ENCODE measurements at regions of chr16 and their contacts with region 1.

Region 1: DNA sequence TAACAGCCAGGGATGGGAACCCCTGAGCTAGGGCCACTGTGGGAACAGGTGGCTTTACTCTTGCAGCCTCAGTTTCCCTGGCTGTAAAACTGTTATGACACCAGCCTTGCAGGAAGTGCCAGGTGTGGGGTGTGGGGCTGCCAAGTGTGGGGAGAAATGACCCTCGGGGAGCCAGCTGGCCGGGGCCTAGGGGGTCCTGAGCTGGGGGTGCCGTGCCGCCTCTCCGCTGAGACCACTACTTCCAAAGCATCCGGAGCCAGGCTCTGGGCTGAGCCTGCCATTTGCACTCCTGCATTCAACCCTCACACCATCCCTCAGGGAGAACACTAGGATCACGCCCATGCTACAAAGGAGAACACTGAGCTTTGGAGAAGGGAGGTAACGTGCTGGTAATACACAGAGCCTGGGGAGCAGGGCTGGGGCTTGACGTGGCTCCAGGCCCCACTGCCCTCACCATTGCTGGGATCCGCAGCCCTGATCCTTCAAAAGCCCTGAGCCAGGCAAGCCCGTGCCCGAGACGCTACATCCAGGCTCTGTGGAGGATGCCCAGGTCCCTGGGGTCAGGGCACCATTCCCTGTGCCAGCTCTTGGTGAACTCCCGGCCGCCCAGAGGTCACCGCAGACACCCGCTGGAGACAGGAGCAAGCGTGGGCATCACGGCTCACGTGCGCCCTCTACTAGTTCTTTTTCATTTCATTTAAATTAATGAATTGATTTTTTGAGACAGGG is 28.8 kb upstream of the GINS2 start:
- DNase-seq: peak; percentile 77
- ATAC-seq: peak; percentile 28
- H3K4me3 ChIP-seq: no peak overlapping the region
- H3K4me3 Mint-ChIP-seq: no peak overlapping the region
- H3K27ac ChIP-seq: no peak overlapping the region
- H3K27ac Mint-ChIP-seq: peak overlapping the region; percentile 26
- H3K4me1 ChIP-seq: peaks cover 7 to 34% of the 10 kb centered on the region in 2 donors
- H3K4me1 Mint-ChIP-seq: peaks cover 27% of the 10 kb centered on the region
- H3K27me3 ChIP-seq: no peaks in the 10 kb centered on the region
- H3K27me3 Mint-ChIP-seq: no peaks in the 10 kb centered on the region
- CTCF ChIP-seq: peak; percentile 80

Region 2: GRCh38 chr16:85491058-85491771 is 226.3 kb before region 1 on chr16:
- CTCF ChIA-PET with region 1: interaction called, 3 read pairs
- POLR2A ChIA-PET with region 1: interaction called, 12 read pairs
- intact Hi-C with region 1: no loop called
- DNase-seq: peak; percentile 61
- ATAC-seq: no peak
- H3K4me3 ChIP-seq: no peak overlapping the region
- H3K4me3 Mint-ChIP-seq: no peak overlapping the region
- H3K27ac ChIP-seq: no peak overlapping the region
- H3K27ac Mint-ChIP-seq: no peak overlapping the region
- H3K4me1 ChIP-seq: no peaks in the 10 kb centered on the region
- H3K4me1 Mint-ChIP-seq: peaks cover 2% of the 10 kb centered on the region
- H3K27me3 ChIP-seq: peaks cover 0 to 16% (median 0%) of the 10 kb centered on the region in 4 experiments
- H3K27me3 Mint-ChIP-seq: peaks cover 24% of the 10 kb centered on the region
- CTCF ChIP-seq: peak; percentile 70

Region 3: DNA sequence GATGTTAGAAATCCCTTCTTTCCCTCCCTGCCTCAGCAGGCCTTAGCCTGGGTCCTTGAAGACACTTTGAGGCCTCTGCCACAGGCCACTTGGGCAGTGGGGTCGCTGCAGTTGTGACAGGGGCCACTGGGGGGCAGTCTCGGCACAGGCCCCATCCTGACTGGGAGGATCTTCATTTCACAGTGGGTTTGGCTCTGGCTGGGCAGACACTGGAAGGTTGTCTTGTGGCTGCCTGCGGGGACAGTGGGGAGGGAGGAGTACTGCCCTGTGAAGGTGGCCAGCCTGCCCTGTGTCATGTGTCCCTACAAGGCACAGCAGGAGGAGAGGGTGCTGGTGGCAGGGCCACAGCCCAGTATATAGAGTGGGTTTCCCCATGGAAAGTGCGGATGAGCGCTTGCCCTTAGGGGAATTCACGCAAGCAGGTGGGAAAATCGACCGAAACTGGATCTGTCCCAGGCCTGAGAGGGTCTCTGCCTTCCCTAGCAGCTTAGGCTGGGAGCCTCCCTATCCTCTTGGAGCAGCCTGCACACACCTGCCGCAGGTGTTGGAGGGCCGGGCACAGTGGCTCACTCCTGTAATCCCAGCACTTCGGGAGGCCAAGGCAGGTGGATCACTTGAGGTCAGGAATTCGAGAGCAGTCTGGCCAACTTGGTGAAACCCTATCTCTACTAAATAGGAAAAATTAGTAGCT is 57.6 kb before region 1 on chr16:
- CTCF ChIA-PET with region 1: interaction called, 45 read pairs
- POLR2A ChIA-PET with region 1: no interaction called
- intact Hi-C with region 1: loop called (anchors 1 kb)
- DNase-seq: peak; percentile 73
- ATAC-seq: peak; percentile 94
- H3K4me3 ChIP-seq: no peak overlapping the region
- H3K4me3 Mint-ChIP-seq: no peak overlapping the region
- H3K27ac ChIP-seq: no peak overlapping the region
- H3K27ac Mint-ChIP-seq: peak overlapping the region; percentile 76
- H3K4me1 ChIP-seq: no peaks in the 10 kb centered on the region
- H3K4me1 Mint-ChIP-seq: peaks cover 4% of the 10 kb centered on the region
- H3K27me3 ChIP-seq: no peaks in the 10 kb centered on the region
- H3K27me3 Mint-ChIP-seq: no peaks in the 10 kb centered on the region
- CTCF ChIP-seq: peak; percentile 90

Region 4: GRCh38 chr16:85675251-85675927 is 42.2 kb before region 1 on chr16:
- CTCF ChIA-PET with region 1: interaction called, 57 read pairs
- POLR2A ChIA-PET with region 1: no interaction called
- intact Hi-C with region 1: loop called (anchors 1 kb)
- DNase-seq: no peak
- ATAC-seq: no peak
- H3K4me3 ChIP-seq: no peak overlapping the region
- H3K4me3 Mint-ChIP-seq: no peak overlapping the region
- H3K27ac ChIP-seq: peak overlapping the region in 1 of 2 donors; percentile 15
- H3K27ac Mint-ChIP-seq: peak overlapping the region; percentile 46
- H3K4me1 ChIP-seq: peaks cover 5 to 7% of the 10 kb centered on the region in 2 donors
- H3K4me1 Mint-ChIP-seq: peaks cover 9% of the 10 kb centered on the region
- H3K27me3 ChIP-seq: no peaks in the 10 kb centered on the region
- H3K27me3 Mint-ChIP-seq: no peaks in the 10 kb centered on the region
- CTCF ChIP-seq: peak; percentile 27

Region 5: GRCh38 chr16:85688586-85689284 is 28.8 kb before region 1 on chr16 and contains the start of gene GINS2:
- CTCF ChIA-PET with region 1: interaction called, 12 read pairs
- POLR2A ChIA-PET with region 1: no interaction called
- intact Hi-C with region 1: no loop called
- DNase-seq: peak; percentile 93
- ATAC-seq: peak; percentile 100
- H3K4me3 ChIP-seq: peak within 1 kb of the TSS in 4 of 5 experiments; percentile 52 to 78 (median 70)
- H3K4me3 Mint-ChIP-seq: peak within 1 kb of the TSS; percentile 81
- H3K27ac ChIP-seq: no peak within 1 kb of the TSS
- H3K27ac Mint-ChIP-seq: no peak within 1 kb of the TSS
- H3K4me1 ChIP-seq: peaks cover 15 to 29% of the 10 kb centered on the region in 2 donors
- H3K4me1 Mint-ChIP-seq: peaks cover 19% of the 10 kb centered on the region
- H3K27me3 ChIP-seq: peaks cover 0 to 13% (median 5%) of the 10 kb centered on the region in 4 experiments
- H3K27me3 Mint-ChIP-seq: peaks cover 3% of the 10 kb centered on the region
- CTCF ChIP-seq: no peak
- total RNA-seq, gene GINS2: 4.2 and 4.3 TPM in 2 replicates

Region 6: DNA sequence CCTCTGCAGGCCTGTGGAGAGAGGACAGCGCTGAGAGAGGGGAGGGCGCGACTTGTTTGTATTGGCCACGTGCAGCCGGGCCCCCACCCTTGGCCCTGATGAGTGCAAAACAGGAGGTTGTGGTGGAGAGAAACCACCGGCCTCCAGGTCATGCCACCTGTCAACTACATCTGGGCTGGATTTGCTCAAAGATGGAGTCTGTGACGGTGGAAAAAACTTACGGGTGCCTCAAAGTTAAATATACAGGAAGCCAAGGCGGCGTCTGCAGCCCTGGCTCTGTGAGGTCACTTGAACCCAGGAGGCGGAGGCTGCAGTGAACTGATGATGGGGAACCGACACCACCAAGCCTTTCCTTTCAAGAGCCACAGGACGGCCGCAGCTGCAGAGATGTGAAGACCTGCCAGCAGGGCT is 17.7 kb after region 1 on chr16:
- CTCF ChIA-PET with region 1: interaction called, 14 read pairs
- POLR2A ChIA-PET with region 1: interaction called, 3 read pairs
- intact Hi-C with region 1: no loop called
- DNase-seq: peak; percentile 68
- ATAC-seq: peak; percentile 81
- H3K4me3 ChIP-seq: peak overlapping the region in 4 of 5 experiments; percentile 3 to 38 (median 22)
- H3K4me3 Mint-ChIP-seq: peak overlapping the region; percentile 69
- H3K27ac ChIP-seq: peak overlapping the region in 1 of 2 donors; percentile 11
- H3K27ac Mint-ChIP-seq: peak overlapping the region; percentile 68
- H3K4me1 ChIP-seq: peaks cover 30 to 34% of the 10 kb centered on the region in 2 donors
- H3K4me1 Mint-ChIP-seq: peaks cover 33% of the 10 kb centered on the region
- H3K27me3 ChIP-seq: no peaks in the 10 kb centered on the region
- H3K27me3 Mint-ChIP-seq: no peaks in the 10 kb centered on the region
- CTCF ChIP-seq: no peak

Region 7: GRCh38 chr16:85750827-85751697 is 33.5 kb after region 1 on chr16 and contains the start of gene C16orf74:
- CTCF ChIA-PET with region 1: interaction called, 11 read pairs
- POLR2A ChIA-PET with region 1: no interaction called
- intact Hi-C with region 1: no loop called
- DNase-seq: peak; percentile 71
- ATAC-seq: peak; percentile 56
- H3K4me3 ChIP-seq: peak within 1 kb of the TSS; percentile 16 to 81 (median 76)
- H3K4me3 Mint-ChIP-seq: peak within 1 kb of the TSS; percentile 97
- H3K27ac ChIP-seq: peak within 1 kb of the TSS; percentile 58 to 68
- H3K27ac Mint-ChIP-seq: peak within 1 kb of the TSS; percentile 100
- H3K4me1 ChIP-seq: peaks cover 80 to 94% of the 10 kb centered on the region in 2 donors
- H3K4me1 Mint-ChIP-seq: peaks cover 72% of the 10 kb centered on the region
- H3K27me3 ChIP-seq: no peaks in the 10 kb centered on the region
- H3K27me3 Mint-ChIP-seq: no peaks in the 10 kb centered on the region
- CTCF ChIP-seq: no peak
- total RNA-seq, gene C16orf74: 83.3 and 92.6 TPM in 2 replicates

Region 8: DNA sequence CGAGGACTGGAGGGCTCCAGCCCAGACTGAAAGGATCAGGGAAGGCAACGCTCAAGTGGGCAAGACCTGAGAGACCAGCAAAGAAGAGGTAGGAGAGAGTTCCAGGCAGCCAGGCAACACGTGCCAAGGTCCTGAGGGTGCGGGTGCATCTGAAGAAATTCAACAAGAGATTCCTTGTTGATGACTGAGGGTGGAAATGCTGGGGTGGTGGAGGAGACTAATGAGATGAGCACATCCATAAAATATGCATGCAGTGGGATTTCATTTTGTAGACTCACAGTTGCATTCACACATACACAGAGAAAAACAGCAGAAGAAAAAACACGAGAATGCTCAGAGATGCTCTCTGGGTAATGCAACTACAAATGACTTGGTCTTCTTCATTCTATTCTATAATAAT is 638.0 kb after region 1 on chr16:
- CTCF ChIA-PET with region 1: no interaction called
- POLR2A ChIA-PET with region 1: no interaction called
- intact Hi-C with region 1: no loop called
- DNase-seq: no peak
- ATAC-seq: no peak
- H3K4me3 ChIP-seq: no peak overlapping the region
- H3K4me3 Mint-ChIP-seq: no peak overlapping the region
- H3K27ac ChIP-seq: no peak overlapping the region
- H3K27ac Mint-ChIP-seq: no peak overlapping the region
- H3K4me1 ChIP-seq: no peaks in the 10 kb centered on the region
- H3K4me1 Mint-ChIP-seq: no peaks in the 10 kb centered on the region
- H3K27me3 ChIP-seq: peaks cover 0 to 9% (median 0%) of the 10 kb centered on the region in 4 experiments
- H3K27me3 Mint-ChIP-seq: peaks cover 52% of the 10 kb centered on the region
- CTCF ChIP-seq: no peak

Measured in B cell (primary cell).